ENCODE measurements at regions of chr5 and their contacts with region 1.

Region 1: GRCh38 chr5:115084246-115084793 is 85.4 kb downstream of the TRIM36 start:
- DNase-seq: no peak
- ATAC-seq: no peak
- H3K4me3 ChIP-seq: no peak overlapping the region
- H3K27ac ChIP-seq: no peak overlapping the region
- H3K4me1 ChIP-seq: no peaks in the 10 kb centered on the region
- H3K27me3 ChIP-seq: 0 out of 2 replicates have a peak, but pooled peaks cover 2% of the 10 kb centered on the region
- CTCF ChIP-seq: no peak

Region 2: DNA sequence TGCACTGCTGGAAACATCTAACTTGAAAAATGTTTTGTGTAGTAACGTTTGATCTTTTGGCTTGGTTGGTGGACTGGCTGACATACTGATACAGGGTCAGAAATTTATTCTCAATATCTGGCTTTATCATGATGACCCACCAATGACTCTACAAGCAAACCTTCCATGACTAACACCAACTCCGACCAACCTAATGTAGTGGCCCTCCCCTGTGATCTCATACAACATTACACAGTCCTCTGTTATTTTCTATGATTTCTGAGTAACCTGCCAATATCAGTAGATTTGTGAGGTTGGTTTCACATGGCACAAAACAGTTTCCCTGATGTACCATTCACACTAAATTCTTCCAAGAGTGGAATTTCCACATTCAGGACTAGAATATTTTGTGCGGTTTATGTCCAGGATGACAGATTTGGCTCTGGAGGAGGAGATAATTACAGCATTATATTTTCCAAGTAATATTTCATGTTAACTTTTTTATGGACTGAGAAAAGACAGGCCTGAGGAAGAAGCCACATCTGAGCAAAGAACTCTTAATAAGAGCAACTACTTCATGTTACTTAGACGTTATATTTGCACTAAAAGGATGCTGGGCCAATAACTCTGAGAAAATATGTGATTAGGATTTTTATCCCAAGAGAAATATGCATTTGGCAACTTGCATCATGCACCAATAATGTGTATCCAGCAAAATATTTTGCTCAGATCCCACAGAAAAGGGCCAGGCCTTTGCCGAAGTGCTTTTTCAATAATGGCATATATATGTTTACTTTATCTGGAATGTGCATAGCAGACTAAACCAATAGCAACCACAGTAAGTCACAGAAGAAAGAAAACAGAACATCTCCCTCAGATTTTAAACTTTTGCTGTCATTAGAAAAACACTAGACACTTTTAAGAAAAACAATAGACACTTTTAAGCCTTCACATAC is 449.1 kb before region 1 on chr5:
- CTCF ChIA-PET with region 1: no interaction called
- POLR2A ChIA-PET with region 1: no interaction called
- in situ Hi-C with region 1: no loop called
- intact Hi-C with region 1: no loop called
- DNase-seq: no peak
- ATAC-seq: no peak
- H3K4me3 ChIP-seq: no peak overlapping the region
- H3K27ac ChIP-seq: no peak overlapping the region
- H3K4me1 ChIP-seq: no peaks in the 10 kb centered on the region
- H3K27me3 ChIP-seq: no peaks in the 10 kb centered on the region
- CTCF ChIP-seq: no peak

Region 3: GRCh38 chr5:115186794-115187193 is 102.5 kb after region 1 on chr5:
- CTCF ChIA-PET with region 1: interaction called, 12 read pairs
- POLR2A ChIA-PET with region 1: no interaction called
- in situ Hi-C with region 1: no loop called
- intact Hi-C with region 1: no loop called
- DNase-seq: no peak
- ATAC-seq: no peak
- H3K4me3 ChIP-seq: no peak overlapping the region
- H3K27ac ChIP-seq: no peak overlapping the region
- H3K4me1 ChIP-seq: no peaks in the 10 kb centered on the region
- H3K27me3 ChIP-seq: peaks cover 18% of the 10 kb centered on the region
- CTCF ChIP-seq: no peak

Region 4: GRCh38 chr5:115494570-115495289 is 410.4 kb after region 1 on chr5:
- CTCF ChIA-PET with region 1: no interaction called
- POLR2A ChIA-PET with region 1: no interaction called
- in situ Hi-C with region 1: no loop called
- intact Hi-C with region 1: no loop called
- DNase-seq: no peak
- ATAC-seq: no peak
- H3K4me3 ChIP-seq: no peak overlapping the region
- H3K27ac ChIP-seq: no peak overlapping the region
- H3K4me1 ChIP-seq: no peaks in the 10 kb centered on the region
- H3K27me3 ChIP-seq: peaks cover 3% of the 10 kb centered on the region; the same call in 1 of the 2 replicates
- CTCF ChIP-seq: no peak

Measured in Panc1 (cell line).